ENCODE measurements at regions of chr9 and their contacts with region 1.

Region 1: DNA sequence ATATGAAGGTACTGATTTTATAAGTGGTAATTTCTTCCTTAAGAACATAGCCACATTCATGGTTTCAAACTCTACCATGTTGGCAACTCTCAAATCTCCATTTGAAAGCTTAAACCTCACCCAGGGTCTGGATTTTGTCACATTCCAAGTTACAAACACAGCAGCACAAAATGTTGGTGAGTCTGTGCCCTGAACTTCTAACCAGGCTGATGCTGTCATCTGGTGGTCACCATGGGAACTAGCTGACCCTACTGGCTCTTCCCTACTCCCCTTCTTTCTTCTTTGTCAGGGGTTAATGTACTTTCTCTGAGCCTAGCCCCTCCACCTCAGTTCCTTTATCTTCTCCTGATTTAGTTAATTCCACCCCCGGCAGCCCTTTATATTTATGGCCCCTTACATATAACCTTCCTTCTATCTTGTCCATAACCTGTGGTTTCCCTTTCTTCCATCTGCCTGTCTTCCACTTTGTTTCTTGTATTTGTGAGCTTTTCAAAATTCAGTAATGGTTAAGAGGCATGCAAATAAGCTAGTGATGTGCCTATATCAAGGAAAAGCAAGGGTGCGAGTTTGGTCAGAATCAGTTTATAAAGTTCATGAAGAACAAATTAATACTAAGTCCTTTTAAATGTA is 35.9 kb downstream of the TGFBR1 start:
- DNase-seq: peak; percentile 51
- ATAC-seq: peak; percentile 65
- H3K4me3 ChIP-seq: no peak overlapping the region
- H3K27ac ChIP-seq: no peak overlapping the region
- H3K4me1 ChIP-seq: peaks cover 20% of the 10 kb centered on the region
- H3K27me3 ChIP-seq: no peaks in the 10 kb centered on the region
- CTCF ChIP-seq: peak; percentile 77

Region 2: DNA sequence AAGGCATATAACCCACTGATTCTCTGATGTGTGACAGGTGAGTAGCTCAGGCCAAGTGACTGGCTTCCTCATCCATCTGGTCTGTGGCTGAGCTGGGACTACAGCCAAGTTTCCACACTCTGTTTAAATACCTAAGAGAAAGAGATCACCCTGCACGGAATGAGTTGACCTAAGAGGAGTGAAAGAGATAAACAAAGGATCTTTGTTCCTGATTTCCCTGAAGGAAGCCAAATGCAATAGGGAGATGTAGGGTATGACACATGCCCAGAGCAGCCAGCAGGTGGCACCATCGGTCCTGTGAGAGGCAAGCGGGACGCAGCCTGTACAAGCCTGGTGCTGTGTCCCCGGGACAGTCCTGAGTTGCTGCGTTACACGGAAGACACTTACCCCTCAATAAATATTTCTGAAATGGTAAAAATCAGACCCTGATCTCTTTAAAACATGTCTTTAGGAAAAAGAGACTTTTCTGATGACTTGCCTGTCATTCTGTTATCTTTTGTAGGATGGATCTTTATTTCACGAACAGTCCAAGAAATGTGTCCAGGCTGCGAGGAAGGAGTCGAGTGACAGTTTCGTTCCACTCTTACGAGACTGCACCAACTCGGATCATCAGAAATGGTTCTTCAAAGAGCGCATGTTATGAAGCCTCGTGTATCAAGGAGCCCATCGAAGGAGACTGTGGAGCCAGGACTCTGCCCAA is 292.2 kb before region 1 on chr9:
- CTCF ChIA-PET with region 1: no interaction called
- POLR2A ChIA-PET with region 1: no interaction called
- intact Hi-C with region 1: loop called (anchors 1 kb)
- DNase-seq: peak; percentile 96
- ATAC-seq: peak; percentile 96
- H3K4me3 ChIP-seq: no peak overlapping the region
- H3K27ac ChIP-seq: peak overlapping the region; percentile 81
- H3K4me1 ChIP-seq: peaks cover 26% of the 10 kb centered on the region
- H3K27me3 ChIP-seq: no peaks in the 10 kb centered on the region
- CTCF ChIP-seq: peak; percentile 83

Region 3: GRCh38 chr9:98860871-98861293 is 279.9 kb before region 1 on chr9:
- CTCF ChIA-PET with region 1: no interaction called
- POLR2A ChIA-PET with region 1: no interaction called
- intact Hi-C with region 1: loop called (anchors 1 kb)
- DNase-seq: peak; percentile 70
- ATAC-seq: peak; percentile 54
- H3K4me3 ChIP-seq: no peak overlapping the region
- H3K27ac ChIP-seq: peak overlapping the region; percentile 97
- H3K4me1 ChIP-seq: peaks cover 25% of the 10 kb centered on the region
- H3K27me3 ChIP-seq: no peaks in the 10 kb centered on the region
- CTCF ChIP-seq: peak; percentile 57

Region 4: DNA sequence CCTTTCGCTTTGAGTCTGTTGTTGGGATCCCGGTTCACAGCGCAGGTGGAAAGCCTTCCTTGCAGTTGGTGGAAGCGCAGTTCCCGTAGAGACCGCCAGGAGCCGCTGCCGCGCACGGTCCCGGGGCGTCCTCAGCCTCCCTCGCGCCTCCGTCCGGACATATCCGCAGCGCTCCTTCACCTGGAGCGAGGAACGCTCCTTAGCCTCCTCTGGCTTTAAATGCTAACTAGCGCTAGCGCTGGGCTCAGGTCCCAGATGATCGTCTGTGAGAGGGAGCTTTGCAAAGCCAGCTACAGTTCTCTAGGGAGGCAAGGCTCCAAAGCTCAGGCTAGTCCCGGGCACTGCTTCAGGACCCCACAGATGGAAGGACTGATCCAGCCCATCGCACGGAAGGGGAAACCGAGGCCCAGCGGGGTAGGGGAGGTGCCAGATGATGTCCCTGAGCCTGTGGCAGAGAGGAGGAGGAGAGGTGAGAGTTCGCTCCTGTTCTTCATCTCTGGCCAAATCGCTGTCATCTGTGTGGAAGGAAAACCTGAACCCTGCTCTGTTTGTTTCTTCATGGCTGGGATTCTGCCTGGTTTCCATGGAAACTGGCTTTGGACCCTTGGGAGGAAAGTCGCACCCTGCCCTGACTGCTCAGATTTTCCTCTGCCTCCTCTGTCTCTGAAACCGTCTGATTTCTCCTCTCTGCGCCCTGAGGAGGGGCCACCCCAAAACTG is 165.6 kb before region 1 on chr9:
- CTCF ChIA-PET with region 1: no interaction called
- POLR2A ChIA-PET with region 1: interaction called, 5 read pairs
- intact Hi-C with region 1: loop called (anchors 1 kb)
- DNase-seq: peak; percentile 84
- ATAC-seq: peak; percentile 94
- H3K4me3 ChIP-seq: peak overlapping the region; percentile 50; the same call in 1 of the 2 replicates
- H3K27ac ChIP-seq: no peak overlapping the region
- H3K4me1 ChIP-seq: 0 out of 2 replicates have a peak, but pooled peaks cover 3% of the 10 kb centered on the region
- H3K27me3 ChIP-seq: no peaks in the 10 kb centered on the region
- CTCF ChIP-seq: peak; percentile 84

Region 5: GRCh38 chr9:99104459-99105151 is 36.2 kb before region 1 on chr9 and contains the start of gene TGFBR1:
- CTCF ChIA-PET with region 1: no interaction called
- POLR2A ChIA-PET with region 1: no interaction called
- intact Hi-C with region 1: loop called (anchors 2 kb)
- DNase-seq: peak; percentile 88
- ATAC-seq: peak; percentile 85
- H3K4me3 ChIP-seq: peak within 1 kb of the TSS; percentile 75
- H3K27ac ChIP-seq: peak within 1 kb of the TSS; percentile 63
- H3K4me1 ChIP-seq: peaks cover 13% of the 10 kb centered on the region
- H3K27me3 ChIP-seq: no peaks in the 10 kb centered on the region
- CTCF ChIP-seq: no peak
- total RNA-seq, gene TGFBR1: 9.5 and 13.2 TPM in 2 replicates

Region 6: GRCh38 chr9:99345942-99346341 is 205.1 kb after region 1 on chr9:
- CTCF ChIA-PET with region 1: no interaction called
- POLR2A ChIA-PET with region 1: no interaction called
- intact Hi-C with region 1: no loop called
- DNase-seq: peak; percentile 74
- ATAC-seq: peak; percentile 66
- H3K4me3 ChIP-seq: no peak overlapping the region
- H3K27ac ChIP-seq: peak overlapping the region; percentile 54
- H3K4me1 ChIP-seq: peaks cover 15% of the 10 kb centered on the region; the same call in 1 of the 2 replicates
- H3K27me3 ChIP-seq: no peaks in the 10 kb centered on the region
- CTCF ChIP-seq: no peak

Measured in PC-3 (cell line).